Motor neuron (in vitro differentiated cells): ENCODE measurements at regions of chr16 and their contacts with region 1.

Region 1: DNA sequence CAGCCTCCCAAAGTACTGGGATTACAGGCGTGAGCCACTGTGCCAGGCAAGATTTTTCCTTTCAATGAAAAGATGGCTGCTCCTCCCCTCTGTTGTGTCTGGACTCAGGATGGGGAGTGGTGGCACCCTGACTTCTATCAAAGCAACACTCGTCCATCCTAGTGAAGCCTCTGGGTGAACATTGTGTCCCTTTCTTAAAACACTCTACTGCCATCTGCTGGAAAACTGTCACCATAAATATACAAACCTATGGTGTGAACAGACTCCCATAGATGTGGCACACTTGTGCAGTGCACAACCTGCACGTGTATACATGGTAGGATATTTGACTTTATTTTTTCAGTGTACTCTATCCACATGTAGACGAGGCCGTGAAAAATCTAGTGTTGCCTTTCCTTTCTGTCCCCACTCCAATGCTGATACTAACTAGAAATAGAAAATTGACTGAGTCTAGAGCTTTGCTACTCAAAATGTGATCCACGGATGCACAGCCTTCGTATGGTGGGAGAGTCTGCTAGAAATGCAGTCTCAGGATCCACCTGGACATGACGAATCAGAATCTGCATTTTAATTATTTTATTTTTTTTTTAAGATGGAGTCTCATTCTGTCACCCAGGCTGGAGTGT is 55.9 kb upstream of the PLCG2 start:
- ATAC-seq: peak; percentile 94 to 100 (median 96)
- H3K4me3 ChIP-seq: no peak overlapping the region
- H3K27ac ChIP-seq: no peak overlapping the region
- H3K4me1 ChIP-seq: peaks cover 4% of the 10 kb centered on the region in 2 donors

Region 2: DNA sequence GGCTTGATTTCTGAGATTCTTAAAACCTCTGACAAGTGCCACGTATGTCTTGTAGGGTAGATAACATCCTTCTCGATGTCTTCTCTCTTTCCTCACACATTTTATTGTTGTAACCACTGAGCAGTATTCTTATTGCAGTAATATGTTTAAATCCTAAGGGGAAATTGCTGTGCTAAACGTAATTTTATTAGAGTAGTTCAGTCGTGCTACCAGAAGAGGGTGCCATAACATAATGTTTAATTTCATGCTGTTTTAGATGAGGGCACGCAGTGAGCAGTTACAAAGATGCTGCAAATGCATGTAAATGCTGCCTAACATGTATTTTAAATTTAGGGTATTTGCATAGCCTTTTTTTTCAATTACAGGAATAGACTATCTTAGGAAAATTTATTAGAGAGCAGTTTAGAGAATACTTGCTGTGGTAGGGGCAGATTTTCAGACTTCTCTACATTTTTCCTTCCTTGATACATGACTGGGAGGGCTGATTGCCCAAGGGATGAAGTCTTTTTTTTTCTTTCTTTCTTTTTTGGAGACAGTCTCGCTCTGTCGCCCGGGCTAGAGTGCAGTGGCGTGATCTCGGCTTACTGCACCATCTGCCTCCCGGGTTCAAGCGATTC is 356.8 kb before region 1 on chr16:
- in situ Hi-C with region 1: loop called in 1 of 9 experiments (anchors 10 kb)
- ATAC-seq: peak in 7 of 8 experiments; percentile 47 to 84 (median 60)
- H3K4me3 ChIP-seq: no peak overlapping the region
- H3K27ac ChIP-seq: no peak overlapping the region
- H3K4me1 ChIP-seq: no peaks in the 10 kb centered on the region

Region 3: GRCh38 chr16:81376880-81377279 is 346.3 kb before region 1 on chr16:
- in situ Hi-C with region 1: loop called in 4 of 9 experiments (anchors 25 kb)
- ATAC-seq: no peak
- H3K4me3 ChIP-seq: no peak overlapping the region
- H3K27ac ChIP-seq: no peak overlapping the region
- H3K4me1 ChIP-seq: no peaks in the 10 kb centered on the region

Region 4: DNA sequence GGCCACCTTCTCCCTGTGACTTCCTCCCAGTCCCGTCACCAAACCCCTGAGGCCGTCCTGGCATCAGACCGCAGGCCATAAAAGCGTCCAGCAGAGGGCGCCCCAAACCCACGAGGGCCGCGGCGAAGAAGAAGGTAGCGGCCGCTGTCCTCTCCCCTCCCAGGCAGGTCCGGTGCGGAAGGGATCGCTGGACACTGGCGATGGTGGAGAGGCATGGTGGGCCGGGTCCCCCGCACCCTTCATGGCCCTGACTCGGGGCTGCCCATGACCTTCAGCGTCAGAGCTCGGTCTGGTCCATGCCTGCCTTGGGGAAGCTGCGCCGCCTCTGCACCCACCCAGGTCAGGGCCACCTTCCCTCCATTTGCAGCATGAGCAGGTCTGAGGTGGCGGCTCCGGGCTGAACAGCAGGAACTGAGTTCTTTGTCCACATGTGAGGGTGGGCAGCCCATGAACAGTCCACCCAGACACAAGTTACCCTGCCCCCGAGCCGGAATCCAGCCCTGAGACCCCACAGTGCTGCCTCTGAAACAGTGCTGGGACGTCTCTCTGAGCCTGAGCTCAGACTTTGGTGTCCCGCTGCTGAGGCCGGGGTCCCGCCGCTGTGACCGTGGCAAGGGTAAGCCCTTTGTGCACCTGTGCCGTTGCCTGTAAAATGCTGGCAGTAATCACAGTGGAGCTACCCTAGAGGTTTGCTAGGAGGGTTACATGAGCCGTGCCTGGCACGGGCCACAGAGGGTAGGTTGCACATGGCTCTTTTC is 319.4 kb before region 1 on chr16:
- in situ Hi-C with region 1: loop called in 8 of 9 experiments (anchors 10 to 25 kb)
- ATAC-seq: peak; percentile 77 to 99 (median 98)
- H3K4me3 ChIP-seq: peak overlapping the region in 2 of 5 donors; percentile 10 to 13
- H3K27ac ChIP-seq: no peak overlapping the region
- H3K4me1 ChIP-seq: no peaks in the 10 kb centered on the region

Region 5: DNA sequence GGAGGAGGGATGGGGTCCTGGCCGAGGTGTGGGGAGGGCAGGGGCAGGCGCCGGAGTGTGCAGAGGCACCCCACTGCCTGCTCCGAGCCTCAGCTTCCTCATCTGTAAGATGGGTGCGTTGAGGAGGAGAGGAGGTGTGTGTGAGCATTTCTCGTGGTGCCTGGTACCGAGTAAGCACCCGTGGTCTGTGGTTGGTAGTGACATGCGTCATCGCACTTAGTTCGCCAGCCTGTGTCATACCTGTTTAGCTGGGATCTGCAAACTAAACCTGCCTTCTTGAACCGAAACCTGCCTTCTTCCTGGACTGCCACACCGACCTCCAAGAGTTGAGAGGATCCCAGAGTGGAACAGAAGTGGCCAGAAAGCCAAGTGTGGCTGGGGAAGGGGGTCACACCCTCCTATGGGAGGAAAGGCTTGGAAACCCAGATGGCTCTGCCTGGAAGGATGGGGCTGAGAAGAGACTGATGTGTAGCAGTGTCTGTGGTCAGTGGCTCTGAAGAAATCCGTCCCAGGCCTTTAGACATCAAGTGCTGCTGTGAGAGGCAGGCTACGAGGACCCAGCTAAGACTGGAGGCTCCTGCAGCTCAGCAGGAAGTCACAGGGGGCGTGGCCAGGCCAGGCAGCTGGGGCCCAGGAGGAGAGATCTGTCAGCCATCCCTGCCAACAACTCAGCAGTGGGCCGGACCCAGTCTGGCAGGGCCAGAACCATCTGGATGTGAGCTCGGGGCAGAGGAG is 106.7 kb before region 1 on chr16:
- in situ Hi-C with region 1: loop called in 2 of 9 experiments (anchors 10 kb)
- ATAC-seq: peak; percentile 62 to 96 (median 84)
- H3K4me3 ChIP-seq: no peak overlapping the region
- H3K27ac ChIP-seq: peak overlapping the region; percentile 15 to 44
- H3K4me1 ChIP-seq: peaks cover 25 to 29% of the 10 kb centered on the region in 2 donors

Region 6: DNA sequence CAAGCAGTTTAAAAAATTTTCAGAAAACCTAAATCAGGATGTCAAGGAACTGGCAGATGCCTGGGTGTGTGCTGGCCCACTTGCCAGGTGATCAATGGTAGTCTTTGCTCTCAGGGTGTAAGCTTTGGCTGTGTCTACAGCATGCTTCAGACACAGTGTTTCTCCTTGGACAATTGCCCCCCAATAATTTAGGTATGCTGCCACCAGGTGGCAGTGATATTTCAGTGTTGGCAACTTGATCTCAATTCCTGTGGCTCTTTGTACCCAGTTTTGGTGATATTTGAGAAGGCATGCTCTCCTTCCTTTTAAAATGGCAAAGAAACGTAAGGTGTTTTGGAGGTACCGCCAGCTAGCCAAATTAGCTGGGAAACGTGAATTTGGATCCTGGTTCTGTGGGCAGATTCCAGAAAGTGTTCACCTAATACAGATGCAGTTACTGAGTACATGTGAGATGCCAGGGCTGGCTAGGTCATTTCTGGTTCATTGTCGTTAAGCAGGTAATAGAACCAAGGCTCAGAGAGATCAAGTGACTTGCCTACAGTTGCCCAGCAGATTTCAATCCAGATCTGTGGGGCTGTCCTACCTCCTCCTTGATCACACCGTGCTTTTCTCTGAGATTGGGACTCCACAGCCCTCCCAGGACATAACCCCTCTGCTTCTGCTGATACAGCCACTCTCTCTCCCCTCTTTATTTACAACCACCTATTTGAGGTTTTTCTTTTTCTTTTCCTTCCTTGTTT is 99.7 kb before region 1 on chr16:
- in situ Hi-C with region 1: loop called in 2 of 9 experiments (anchors 10 kb)
- ATAC-seq: peak in 1 of 8 experiments; percentile 40
- H3K4me3 ChIP-seq: no peak overlapping the region
- H3K27ac ChIP-seq: no peak overlapping the region
- H3K4me1 ChIP-seq: peaks cover 7 to 17% of the 10 kb centered on the region in 2 donors

Region 7: DNA sequence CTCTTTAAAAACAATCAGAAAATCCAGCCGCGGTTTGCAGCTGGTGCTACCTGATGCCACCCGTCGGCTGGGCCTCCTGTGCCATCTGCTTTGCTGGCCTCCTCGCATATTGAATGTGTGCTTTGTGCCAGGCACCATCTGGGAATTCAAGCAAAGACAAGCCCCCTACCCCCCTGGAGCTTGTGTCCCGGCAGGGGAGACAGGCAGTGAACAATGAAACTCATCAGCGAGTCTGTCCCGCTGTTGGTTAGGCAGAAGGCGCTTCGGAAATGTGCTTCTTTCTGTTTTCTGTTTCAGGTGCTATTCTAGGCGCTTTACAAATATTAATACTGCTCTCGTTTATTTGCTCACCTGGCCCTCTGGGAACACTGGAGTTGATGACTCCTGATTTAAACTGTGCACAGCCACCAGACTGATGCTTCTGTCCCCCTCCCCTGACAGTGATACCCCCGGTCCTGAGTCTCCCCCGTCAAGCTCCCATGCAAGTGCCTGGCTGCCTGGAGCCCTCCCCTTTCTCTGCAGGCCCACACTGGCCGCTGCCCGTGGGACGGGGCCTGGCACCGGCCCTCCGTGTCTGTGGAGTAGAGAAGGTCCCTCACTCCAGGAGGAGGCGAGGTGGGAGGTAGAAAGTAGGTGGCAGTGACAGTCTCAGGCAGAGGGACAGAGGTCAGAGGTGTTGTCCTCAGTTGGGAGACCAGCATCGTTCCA is 70.3 kb before region 1 on chr16:
- in situ Hi-C with region 1: no loop called
- ATAC-seq: peak in 4 of 8 experiments; percentile 24 to 58 (median 34)
- H3K4me3 ChIP-seq: no peak overlapping the region
- H3K27ac ChIP-seq: no peak overlapping the region
- H3K4me1 ChIP-seq: peaks cover 11 to 35% of the 10 kb centered on the region in 2 donors